Transverse colon (tissue), 4 donors: ENCODE measurements at regions of chr6 and their contacts with region 1.

Region 1: GRCh38 chr6:160520043-160520904 is 143.8 kb downstream of the LPA start:
- DNase-seq: peak; percentile 84
- H3K4me3 ChIP-seq: peak overlapping the region; percentile 48 to 84 (median 64)
- H3K27ac ChIP-seq: peak overlapping the region; percentile 75 to 85 (median 82)
- H3K4me1 ChIP-seq: peaks cover 0 to 7% (median 3%) of the 10 kb centered on the region in 4 donors
- H3K27me3 ChIP-seq: no peaks in the 10 kb centered on the region
- CTCF ChIP-seq: peak in 2 of 5 experiments; percentile 87 to 90
- EP300 ChIP-seq: no peak
- POLR2A ChIP-seq: peak; percentile 14

Region 2: DNA sequence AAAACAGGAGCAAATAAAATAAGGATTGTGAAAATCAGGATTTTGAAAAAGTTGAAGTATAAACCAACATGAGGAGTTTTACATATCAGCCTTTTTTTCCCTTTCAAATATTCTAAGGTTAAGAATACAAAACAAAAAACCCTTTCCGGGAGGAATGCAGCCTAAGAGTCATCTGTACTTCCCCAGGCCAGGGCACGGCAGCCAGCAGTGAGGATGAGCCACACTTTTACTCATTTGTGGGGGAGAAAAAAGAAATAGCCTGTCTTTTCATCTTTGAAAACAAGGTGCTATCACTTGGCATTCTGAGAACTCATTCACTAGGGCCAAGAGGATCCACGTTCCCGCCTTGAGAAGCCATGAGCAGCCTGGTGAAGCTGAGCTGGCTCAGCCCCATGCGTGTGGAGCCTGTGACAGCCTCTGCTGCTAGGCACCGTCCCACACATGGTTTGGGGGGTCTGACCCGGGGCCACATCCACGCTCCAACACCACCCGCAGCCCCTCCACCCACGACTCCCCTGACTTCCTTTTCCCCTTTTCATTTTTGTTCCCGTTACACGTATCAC is 387.4 kb before region 1 on chr6:
- in situ Hi-C with region 1: no loop called
- intact Hi-C with region 1: loop called (anchors 5 kb)
- DNase-seq: no peak
- H3K4me3 ChIP-seq: no peak overlapping the region
- H3K27ac ChIP-seq: no peak overlapping the region
- H3K4me1 ChIP-seq: peaks cover 0 to under 1% (median 0%) of the 10 kb centered on the region in 4 donors
- H3K27me3 ChIP-seq: no peaks in the 10 kb centered on the region
- CTCF ChIP-seq: no peak
- EP300 ChIP-seq: no peak
- POLR2A ChIP-seq: no peak

Region 3: GRCh38 chr6:160535271-160535670 is 15.0 kb after region 1 on chr6:
- in situ Hi-C with region 1: no loop called
- intact Hi-C with region 1: loop called (anchors 2 kb)
- DNase-seq: no peak
- H3K4me3 ChIP-seq: no peak overlapping the region
- H3K27ac ChIP-seq: no peak overlapping the region
- H3K4me1 ChIP-seq: peaks cover 0 to 5% (median 0%) of the 10 kb centered on the region in 4 donors
- H3K27me3 ChIP-seq: no peaks in the 10 kb centered on the region
- CTCF ChIP-seq: no peak
- EP300 ChIP-seq: no peak
- POLR2A ChIP-seq: no peak

Region 4: GRCh38 chr6:160573943-160574342 is 53.7 kb after region 1 on chr6:
- in situ Hi-C with region 1: no loop called
- intact Hi-C with region 1: no loop called
- DNase-seq: no peak
- H3K4me3 ChIP-seq: no peak overlapping the region
- H3K27ac ChIP-seq: no peak overlapping the region
- H3K4me1 ChIP-seq: no peaks in the 10 kb centered on the region
- H3K27me3 ChIP-seq: no peaks in the 10 kb centered on the region
- CTCF ChIP-seq: no peak
- EP300 ChIP-seq: no peak
- POLR2A ChIP-seq: no peak

Region 5: GRCh38 chr6:161139766-161140553 is 619.7 kb after region 1 on chr6:
- in situ Hi-C with region 1: no loop called
- intact Hi-C with region 1: no loop called
- DNase-seq: peak; percentile 72
- H3K4me3 ChIP-seq: no peak overlapping the region
- H3K27ac ChIP-seq: no peak overlapping the region
- H3K4me1 ChIP-seq: no peaks in the 10 kb centered on the region
- H3K27me3 ChIP-seq: no peaks in the 10 kb centered on the region
- CTCF ChIP-seq: peak in 1 of 5 experiments; percentile 42
- EP300 ChIP-seq: no peak
- POLR2A ChIP-seq: no peak